AG04450 (cell line): ENCODE measurements at regions of chr14 and their contacts with region 1.

Region 1: DNA sequence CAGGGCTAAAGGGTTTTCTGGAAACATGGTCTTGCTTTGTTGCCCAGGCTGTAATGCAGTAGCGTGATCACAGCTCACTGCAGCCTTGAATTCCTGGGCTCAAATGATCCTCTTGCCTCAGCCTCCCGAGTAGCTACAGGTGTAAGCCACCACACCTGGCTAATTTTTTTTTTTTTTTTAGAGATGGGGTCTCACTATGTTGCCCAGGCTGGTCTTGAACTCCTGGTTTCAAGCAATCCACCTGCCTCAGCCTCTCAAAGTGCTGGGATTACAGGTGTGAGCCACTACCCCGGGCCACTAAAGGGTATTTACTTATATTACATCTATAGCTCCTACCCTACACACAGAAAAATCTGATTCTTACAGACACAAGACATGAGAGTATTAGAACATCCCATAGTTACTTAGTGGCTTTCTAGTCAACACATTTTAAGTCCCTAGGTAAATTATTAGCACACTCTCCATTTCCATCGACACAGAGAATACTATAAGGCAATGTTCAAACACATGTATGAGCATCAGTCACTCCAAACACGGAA is 6.2 kb upstream of the DCAF11 start:
- DNase-seq: no peak
- H3K4me3 ChIP-seq: no peak overlapping the region
- H3K27ac ChIP-seq: no peak overlapping the region
- H3K27me3 ChIP-seq: no peaks in the 10 kb centered on the region
- CTCF ChIP-seq: no peak

Region 2: GRCh38 chr14:24051789-24052655 is 56.4 kb before region 1 on chr14 and contains the start of gene CARMIL3:
- CTCF ChIA-PET with region 1: interaction called, 193 read pairs
- POLR2A ChIA-PET with region 1: interaction called, 5 read pairs
- DNase-seq: peak; percentile 16
- H3K4me3 ChIP-seq: peak within 1 kb of the TSS; percentile 60
- H3K27ac ChIP-seq: no peak within 1 kb of the TSS
- H3K27me3 ChIP-seq: peaks cover 30% of the 10 kb centered on the region
- CTCF ChIP-seq: no peak
- polyA plus RNA-seq, gene CARMIL3: 0.02 TPM in 1 of 2 replicates, not detected in the other

Region 3: GRCh38 chr14:24058260-24058950 is 50.0 kb before region 1 on chr14:
- CTCF ChIA-PET with region 1: interaction called, 193 read pairs
- POLR2A ChIA-PET with region 1: interaction called, 9 read pairs
- DNase-seq: peak; percentile 59
- H3K4me3 ChIP-seq: no peak overlapping the region
- H3K27ac ChIP-seq: no peak overlapping the region
- H3K27me3 ChIP-seq: peaks cover 36% of the 10 kb centered on the region
- CTCF ChIP-seq: peak; percentile 93

Region 4: DNA sequence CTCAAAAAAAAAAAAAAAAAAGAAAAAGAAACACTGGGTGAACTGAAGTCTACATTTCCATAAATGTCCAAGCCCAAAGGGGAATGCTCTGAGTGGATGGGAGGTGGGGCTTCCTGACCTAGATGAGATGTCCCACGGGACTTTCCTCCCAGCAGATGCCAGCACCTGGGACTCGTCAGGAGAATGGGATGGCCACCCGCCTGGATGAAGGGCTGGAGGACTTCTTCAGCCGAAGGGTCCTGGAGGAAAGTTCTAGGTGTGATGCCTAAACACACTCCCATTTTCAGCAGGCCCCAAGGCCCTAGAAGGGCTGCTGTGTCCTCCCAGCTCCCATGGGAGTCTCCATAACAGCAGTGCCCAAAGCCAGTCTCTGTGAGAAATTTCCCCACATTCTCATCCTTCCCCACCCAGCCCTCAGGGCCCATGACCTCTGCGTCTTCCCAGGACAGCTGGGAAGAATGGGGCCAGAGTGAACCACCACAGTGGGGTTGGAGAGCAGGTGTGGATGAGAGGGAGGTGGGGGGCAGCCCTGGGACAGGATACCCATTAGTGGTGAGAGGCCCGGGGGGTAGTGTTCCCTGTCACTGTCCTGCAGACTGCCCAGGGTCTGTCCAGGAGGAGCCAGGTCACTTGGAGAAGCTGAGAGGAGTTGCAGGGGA is 44.2 kb before region 1 on chr14:
- CTCF ChIA-PET with region 1: interaction called, 193 read pairs
- POLR2A ChIA-PET with region 1: no interaction called
- DNase-seq: no peak
- H3K4me3 ChIP-seq: no peak overlapping the region
- H3K27ac ChIP-seq: no peak overlapping the region
- H3K27me3 ChIP-seq: peaks cover 47% of the 10 kb centered on the region
- CTCF ChIP-seq: no peak

Region 5: GRCh38 chr14:24279301-24280186 is 171.1 kb after region 1 on chr14:
- CTCF ChIA-PET with region 1: no interaction called
- POLR2A ChIA-PET with region 1: no interaction called
- DNase-seq: no peak
- H3K4me3 ChIP-seq: no peak overlapping the region
- H3K27ac ChIP-seq: no peak overlapping the region
- H3K27me3 ChIP-seq: no peaks in the 10 kb centered on the region
- CTCF ChIP-seq: 0 out of 2 replicates have a peak, but pooled peaks have one; percentile 2